T-cell (primary cell): ENCODE measurements at regions of chr13 and their contacts with region 1.

Region 1: GRCh38 chr13:46022481-46022880 is 30.1 kb downstream of the ZC3H13 start:
- DNase-seq: no peak
- ATAC-seq: no peak
- H3K4me3 ChIP-seq: no peak overlapping the region
- H3K4me3 Mint-ChIP-seq: no peak overlapping the region
- H3K27ac ChIP-seq: no peak overlapping the region
- H3K27ac Mint-ChIP-seq: no peak overlapping the region
- H3K4me1 ChIP-seq: no peaks in the 10 kb centered on the region
- H3K4me1 Mint-ChIP-seq: peaks cover 4 to 8% (median 6%) of the 10 kb centered on the region in 3 donors
- H3K27me3 ChIP-seq: no peaks in the 10 kb centered on the region
- H3K27me3 Mint-ChIP-seq: no peaks in the 10 kb centered on the region

Region 2: GRCh38 chr13:46150134-46150693 is 127.7 kb after region 1 on chr13:
- CTCF ChIA-PET with region 1: no interaction called
- POLR2A ChIA-PET with region 1: interaction called in 1 of 2 experiments, 11 read pairs
- DNase-seq: no peak
- ATAC-seq: no peak
- H3K4me3 ChIP-seq: no peak overlapping the region
- H3K4me3 Mint-ChIP-seq: no peak overlapping the region
- H3K27ac ChIP-seq: peak overlapping the region; percentile 3
- H3K27ac Mint-ChIP-seq: peak overlapping the region; percentile 84 to 85
- H3K4me1 ChIP-seq: peaks cover 0 to 2% of the 10 kb centered on the region in 2 experiments
- H3K4me1 Mint-ChIP-seq: peaks cover 30 to 45% (median 35%) of the 10 kb centered on the region in 3 donors
- H3K27me3 ChIP-seq: no peaks in the 10 kb centered on the region
- H3K27me3 Mint-ChIP-seq: no peaks in the 10 kb centered on the region